ENCODE measurements at regions of chr5 and their contacts with region 1.

Region 1: DNA sequence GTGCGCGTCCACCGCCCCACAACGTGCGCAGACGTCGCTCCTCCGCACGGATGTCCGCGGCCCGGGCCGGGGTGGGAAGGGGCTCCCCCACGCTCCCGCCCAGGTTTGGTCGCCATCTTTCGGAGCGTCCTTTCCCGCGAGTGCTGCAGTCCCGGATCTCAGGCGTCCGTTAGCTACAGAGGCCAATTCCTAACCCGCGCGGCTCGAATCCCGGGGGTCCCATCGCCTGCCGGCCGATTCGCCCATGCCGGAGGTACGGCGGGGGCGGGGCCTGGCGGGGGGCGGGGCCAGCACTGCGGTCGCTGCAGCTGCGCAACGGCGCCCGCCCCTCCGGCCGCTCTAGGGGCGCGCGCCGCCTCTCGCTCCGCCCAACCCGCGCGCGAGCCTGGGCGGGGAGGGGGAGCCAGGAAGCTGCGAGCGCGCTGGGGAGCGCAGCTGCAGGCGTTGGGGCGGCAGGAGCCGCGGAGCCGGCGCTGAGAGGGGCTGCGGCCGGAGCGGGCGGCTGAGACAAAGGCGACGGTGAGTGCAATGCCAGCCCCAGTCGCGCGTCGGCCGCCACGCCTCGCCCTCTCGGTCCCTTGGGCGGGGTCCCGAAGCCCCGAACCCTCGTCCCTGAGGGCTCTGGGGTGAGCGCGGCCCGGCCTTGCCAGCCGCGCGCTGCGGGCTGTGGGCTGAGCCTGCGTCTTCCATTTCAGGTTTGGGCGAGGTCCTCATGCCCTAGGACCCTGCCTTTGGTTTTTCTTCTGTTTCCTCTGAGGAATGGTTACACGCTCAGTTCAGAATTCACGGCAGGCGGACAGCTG is at the start of gene CDC42SE2:
- DNase-seq: peak; percentile 81 to 92 (median 88)
- ATAC-seq: peak; percentile 78 to 84
- H3K4me3 Mint-ChIP-seq: peak within 1 kb of the TSS; percentile 79 to 98 (median 91)
- H3K27ac Mint-ChIP-seq: peak within 1 kb of the TSS; percentile 93 to 98 (median 96)
- H3K4me1 Mint-ChIP-seq: peaks cover 11 to 64% (median 39%) of the 10 kb centered on the region in 4 donors
- H3K27me3 Mint-ChIP-seq: no peaks in the 10 kb centered on the region
- polyA plus RNA-seq, gene CDC42SE2: 423 to 544 (median 480) TPM

Region 2: DNA sequence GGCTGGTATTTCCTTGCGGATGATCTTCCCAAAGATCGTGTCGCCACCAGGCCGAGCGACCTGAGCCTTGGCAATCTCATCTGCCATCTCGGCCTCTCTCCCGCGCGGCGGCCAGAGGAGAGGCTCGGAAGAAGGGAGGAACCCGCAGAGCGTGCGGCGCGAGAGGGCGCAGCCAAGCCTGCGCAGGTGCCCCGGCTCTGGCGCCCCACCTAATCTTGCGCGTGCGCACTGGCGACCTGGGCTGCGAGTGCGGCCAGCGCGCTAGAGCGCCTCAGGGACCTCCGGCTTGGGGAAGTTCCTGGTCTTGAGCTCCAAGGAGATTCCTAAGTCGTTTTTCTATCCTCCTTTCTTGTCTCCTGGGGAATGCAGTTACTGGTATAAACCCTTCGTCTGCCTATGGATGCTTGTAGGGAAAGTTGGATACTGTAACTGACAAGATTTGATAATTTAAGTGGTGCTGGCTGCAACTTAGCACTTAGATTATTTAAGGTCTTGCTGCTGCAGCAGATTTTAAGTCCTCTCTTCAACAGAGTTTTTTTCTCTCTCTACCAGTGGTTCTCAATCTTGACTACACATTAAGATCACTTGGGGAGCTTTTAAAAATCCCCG is 98.6 kb before region 1 on chr5 and contains the start of gene HINT1:
- POLR2A ChIA-PET with region 1: interaction called, 63 read pairs
- DNase-seq: peak; percentile 84 to 95 (median 92)
- ATAC-seq: peak; percentile 83 to 84
- H3K4me3 Mint-ChIP-seq: peak within 1 kb of the TSS; percentile 89 to 99 (median 96)
- H3K27ac Mint-ChIP-seq: peak within 1 kb of the TSS; percentile 86 to 99 (median 97)
- H3K4me1 Mint-ChIP-seq: peaks cover 20 to 50% (median 44%) of the 10 kb centered on the region in 4 donors
- H3K27me3 Mint-ChIP-seq: no peaks in the 10 kb centered on the region
- polyA plus RNA-seq, gene HINT1: 366 to 428 (median 408) TPM

Region 3: GRCh38 chr5:131209506-131210150 is 54.2 kb before region 1 on chr5:
- POLR2A ChIA-PET with region 1: interaction called, 25 read pairs
- DNase-seq: peak; percentile 8 to 90 (median 73)
- ATAC-seq: peak; percentile 90 to 94
- H3K4me3 Mint-ChIP-seq: peak overlapping the region; percentile 68 to 91 (median 82)
- H3K27ac Mint-ChIP-seq: peak overlapping the region; percentile 88 to 99 (median 96)
- H3K4me1 Mint-ChIP-seq: peaks cover 28 to 69% (median 59%) of the 10 kb centered on the region in 4 donors
- H3K27me3 Mint-ChIP-seq: no peaks in the 10 kb centered on the region

Region 4: GRCh38 chr5:131281133-131281867 is 17.5 kb after region 1 on chr5:
- POLR2A ChIA-PET with region 1: interaction called, 148 read pairs
- DNase-seq: peak in 4 of 10 donors; percentile 64 to 90 (median 82)
- ATAC-seq: peak; percentile 78 to 87
- H3K4me3 Mint-ChIP-seq: peak overlapping the region; percentile 75 to 89 (median 79)
- H3K27ac Mint-ChIP-seq: peak overlapping the region; percentile 83 to 98 (median 96)
- H3K4me1 Mint-ChIP-seq: peaks cover 35 to 94% (median 76%) of the 10 kb centered on the region in 4 donors
- H3K27me3 Mint-ChIP-seq: peaks cover 0 to 7% (median 0%) of the 10 kb centered on the region in 5 donors

Region 5: GRCh38 chr5:131297886-131298285 is 34.0 kb after region 1 on chr5:
- POLR2A ChIA-PET with region 1: interaction called, 13 read pairs
- DNase-seq: no peak
- ATAC-seq: no peak
- H3K4me3 Mint-ChIP-seq: peak overlapping the region in 3 of 10 donors; percentile 28 to 45 (median 31)
- H3K27ac Mint-ChIP-seq: peak overlapping the region in 7 of 10 donors; percentile 36 to 84 (median 55)
- H3K4me1 Mint-ChIP-seq: peaks cover 36 to 85% (median 82%) of the 10 kb centered on the region in 4 donors
- H3K27me3 Mint-ChIP-seq: no peaks in the 10 kb centered on the region

Region 6: DNA sequence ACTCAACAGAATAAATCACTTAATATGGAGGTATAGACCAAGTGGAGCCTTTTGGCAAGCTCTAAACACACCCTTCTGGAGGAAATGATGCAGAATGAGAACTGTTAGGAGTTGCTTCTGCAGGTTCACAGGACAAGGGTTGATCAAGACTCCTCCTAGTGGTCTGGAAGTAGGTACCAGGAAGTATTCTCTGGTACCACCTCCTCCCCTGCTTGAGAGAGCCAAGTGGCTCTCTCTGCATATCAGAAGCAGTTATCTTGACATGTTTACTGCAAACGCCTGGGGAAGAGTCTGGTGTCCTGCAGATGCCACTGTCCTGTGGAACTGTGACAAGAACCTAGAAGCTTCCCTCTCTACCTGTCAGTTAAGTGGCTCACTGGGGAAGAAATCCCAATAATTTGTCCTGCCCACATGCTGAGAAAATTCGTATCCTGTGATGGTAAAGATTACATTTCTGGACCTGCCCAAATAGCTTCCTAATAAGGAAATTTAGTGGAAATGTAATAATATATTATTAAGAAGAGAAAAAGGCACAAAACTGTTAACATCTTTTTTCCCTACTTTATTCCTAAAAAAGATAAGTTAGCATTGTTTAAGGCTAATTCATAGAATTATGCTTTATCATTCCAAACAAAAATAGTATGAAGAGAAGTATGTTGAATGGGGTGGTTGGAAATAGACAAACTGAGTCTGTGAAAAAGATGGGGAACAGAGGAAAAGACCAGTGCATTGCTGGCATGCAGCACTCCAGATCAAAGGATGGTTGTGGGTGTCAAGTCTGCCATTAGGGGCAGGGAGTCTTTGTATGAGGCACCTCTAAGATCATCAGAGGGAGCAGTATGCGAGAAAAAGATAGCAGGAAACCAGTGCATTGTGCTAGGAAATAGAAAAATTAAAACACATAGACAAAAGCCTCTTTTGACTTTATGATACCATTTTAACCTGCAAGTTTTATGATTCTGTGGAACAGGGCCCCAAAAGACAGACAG is 118.9 kb after region 1 on chr5:
- POLR2A ChIA-PET with region 1: interaction called, 159 read pairs
- DNase-seq: peak in 9 of 10 donors; percentile 36 to 86 (median 67)
- ATAC-seq: peak; percentile 57 to 68
- H3K4me3 Mint-ChIP-seq: peak overlapping the region; percentile 47 to 84 (median 71)
- H3K27ac Mint-ChIP-seq: peak overlapping the region; percentile 97 to 100 (median 99)
- H3K4me1 Mint-ChIP-seq: peaks cover 41 to 93% (median 89%) of the 10 kb centered on the region in 4 donors
- H3K27me3 Mint-ChIP-seq: no peaks in the 10 kb centered on the region